Gastrocnemius medialis (tissue), 4 donors: ENCODE measurements at regions of chr10 and their contacts with region 1.

Region 1: DNA sequence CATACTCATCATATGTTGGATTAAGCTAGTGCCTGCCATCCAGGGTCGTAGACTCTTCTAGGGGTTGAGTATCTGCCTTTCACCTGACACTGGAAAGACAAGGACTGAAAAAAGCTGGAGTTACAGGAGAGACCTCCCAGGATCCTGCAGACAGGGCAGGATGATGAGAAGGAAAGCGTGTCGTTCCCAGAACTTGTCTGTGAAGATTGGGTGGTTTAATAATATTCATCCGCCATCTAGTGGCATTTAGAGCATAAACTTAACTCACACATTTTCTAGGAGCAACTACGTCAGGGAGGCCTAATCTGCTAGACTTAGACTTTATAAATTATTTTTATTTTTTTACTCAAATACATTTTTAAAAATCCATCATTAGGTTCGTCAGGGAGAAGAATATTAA is 59.6 kb downstream of the ADRB1 start:
- DNase-seq: no peak
- ATAC-seq: peak in 1 of 2 donors; percentile 80
- H3K4me3 ChIP-seq: no peak overlapping the region
- H3K27ac ChIP-seq: no peak overlapping the region
- H3K4me1 ChIP-seq: peaks cover 3 to 6% of the 10 kb centered on the region in 2 donors
- H3K27me3 ChIP-seq: peaks cover 10 to 16% (median 15%) of the 10 kb centered on the region in 3 donors
- CTCF ChIP-seq: peak in 4 of 5 experiments; percentile 25 to 55 (median 40)
- POLR2A ChIP-seq: no peak

Region 2: GRCh38 chr10:113704637-113705343 is 398.5 kb before region 1 on chr10:
- in situ Hi-C with region 1: loop called in 3 of 4 experiments (anchors 10 to 25 kb)
- intact Hi-C with region 1: loop called (anchors 2 kb)
- DNase-seq: no peak
- ATAC-seq: no peak
- H3K4me3 ChIP-seq: no peak overlapping the region
- H3K27ac ChIP-seq: no peak overlapping the region
- H3K4me1 ChIP-seq: peaks cover 0 to 7% of the 10 kb centered on the region in 2 donors
- H3K27me3 ChIP-seq: no peaks in the 10 kb centered on the region
- CTCF ChIP-seq: peak in 3 of 5 experiments; percentile 44 to 61 (median 56)
- POLR2A ChIP-seq: no peak

Region 3: GRCh38 chr10:113791691-113792090 is 311.6 kb before region 1 on chr10:
- in situ Hi-C with region 1: loop called (anchors 5 to 10 kb)
- intact Hi-C with region 1: no loop called
- DNase-seq: no peak
- ATAC-seq: no peak
- H3K4me3 ChIP-seq: no peak overlapping the region
- H3K27ac ChIP-seq: no peak overlapping the region
- H3K4me1 ChIP-seq: peaks cover 0 to 2% of the 10 kb centered on the region in 2 donors
- H3K27me3 ChIP-seq: no peaks in the 10 kb centered on the region
- CTCF ChIP-seq: no peak
- POLR2A ChIP-seq: no peak

Region 4: GRCh38 chr10:113802997-113803396 is 300.3 kb before region 1 on chr10:
- in situ Hi-C with region 1: loop called (anchors 5 to 10 kb)
- intact Hi-C with region 1: loop called (anchors 1 kb)
- DNase-seq: no peak
- ATAC-seq: no peak
- H3K4me3 ChIP-seq: no peak overlapping the region
- H3K27ac ChIP-seq: no peak overlapping the region
- H3K4me1 ChIP-seq: peaks cover 0 to 3% of the 10 kb centered on the region in 2 donors
- H3K27me3 ChIP-seq: no peaks in the 10 kb centered on the region
- CTCF ChIP-seq: no peak
- POLR2A ChIP-seq: no peak